ENCODE measurements at regions of chr14 and their contacts with region 1.

Region 1: GRCh38 chr14:64294672-64295413 is 672 bp upstream of the ESR2 start:
- DNase-seq: peak; percentile 42 to 84
- H3K4me3 ChIP-seq: peak overlapping the region; percentile 43; the same call in 1 of the 2 replicates
- H3K27ac ChIP-seq: no peak overlapping the region
- H3K4me1 ChIP-seq: 0 out of 2 replicates have a peak, but pooled peaks cover 9% of the 10 kb centered on the region
- H3K27me3 ChIP-seq: no peaks in the 10 kb centered on the region
- CTCF ChIP-seq: peak; percentile 97

Region 2: DNA sequence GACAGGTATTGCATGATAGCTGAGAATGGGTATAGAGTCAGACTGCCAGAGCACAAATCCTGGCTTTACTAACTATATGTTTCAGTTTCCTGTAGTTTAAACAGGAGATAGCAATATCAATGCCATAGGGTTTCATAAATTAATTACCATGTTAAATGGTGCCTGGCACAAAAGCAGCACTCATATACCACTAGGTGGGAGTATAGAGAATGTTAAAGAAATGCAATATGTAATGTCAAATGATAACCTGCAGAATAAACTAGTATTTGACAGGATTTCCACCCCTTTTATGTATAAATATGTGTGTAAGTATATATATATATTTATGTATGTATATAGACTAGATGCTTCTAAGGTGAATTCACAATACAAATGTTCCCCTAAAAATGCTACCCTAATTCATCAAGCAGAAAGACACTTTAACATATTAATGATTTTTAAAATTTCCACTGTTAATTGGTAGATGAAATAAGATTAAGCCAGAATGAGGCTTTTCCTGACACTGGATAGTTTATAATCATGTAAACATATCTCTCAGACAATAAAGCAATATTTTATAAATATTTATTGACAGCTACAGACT is 661.8 kb before region 1 on chr14:
- CTCF ChIA-PET with region 1: no interaction called
- POLR2A ChIA-PET with region 1: no interaction called
- intact Hi-C with region 1: loop called (anchors 10 kb)
- DNase-seq: peak in 1 of 2 experiments; percentile 44
- H3K4me3 ChIP-seq: no peak overlapping the region
- H3K27ac ChIP-seq: no peak overlapping the region
- H3K4me1 ChIP-seq: no peaks in the 10 kb centered on the region
- H3K27me3 ChIP-seq: no peaks in the 10 kb centered on the region
- CTCF ChIP-seq: peak; percentile 75

Region 3: GRCh38 chr14:63800651-63801375 is 494.0 kb before region 1 on chr14:
- CTCF ChIA-PET with region 1: no interaction called
- POLR2A ChIA-PET with region 1: no interaction called
- intact Hi-C with region 1: loop called (anchors 2 kb)
- DNase-seq: no peak
- H3K4me3 ChIP-seq: no peak overlapping the region
- H3K27ac ChIP-seq: no peak overlapping the region
- H3K4me1 ChIP-seq: 0 out of 2 replicates have a peak, but pooled peaks cover 4% of the 10 kb centered on the region
- H3K27me3 ChIP-seq: no peaks in the 10 kb centered on the region
- CTCF ChIP-seq: no peak

Region 4: DNA sequence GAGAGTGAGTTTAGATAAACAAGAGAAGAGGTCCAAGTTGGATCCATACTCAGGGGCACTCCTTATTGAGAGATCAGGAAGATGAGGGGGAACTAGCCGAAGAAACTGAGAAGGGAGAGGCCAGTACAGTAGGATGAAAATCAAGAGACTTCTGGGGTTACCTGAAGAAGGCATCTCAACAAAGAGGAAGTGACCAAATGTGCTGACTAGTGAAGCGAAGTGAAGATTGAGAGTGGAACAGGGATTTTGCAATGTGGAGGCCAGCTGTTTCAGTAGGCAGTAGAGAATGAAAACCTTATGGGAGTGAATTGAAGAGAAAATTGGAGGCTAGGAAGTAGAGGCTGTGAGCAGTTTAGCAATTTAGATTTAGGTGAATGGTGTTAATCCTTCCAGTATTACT is 289.0 kb before region 1 on chr14:
- CTCF ChIA-PET with region 1: interaction called, 3 read pairs
- POLR2A ChIA-PET with region 1: no interaction called
- intact Hi-C with region 1: loop called (anchors 2 kb)
- DNase-seq: no peak
- H3K4me3 ChIP-seq: no peak overlapping the region
- H3K27ac ChIP-seq: no peak overlapping the region
- H3K4me1 ChIP-seq: no peaks in the 10 kb centered on the region
- H3K27me3 ChIP-seq: no peaks in the 10 kb centered on the region
- CTCF ChIP-seq: no peak

Region 5: GRCh38 chr14:64137657-64138290 is 157.1 kb before region 1 on chr14:
- CTCF ChIA-PET with region 1: no interaction called
- POLR2A ChIA-PET with region 1: no interaction called
- intact Hi-C with region 1: loop called (anchors 2 kb)
- DNase-seq: no peak
- H3K4me3 ChIP-seq: no peak overlapping the region
- H3K27ac ChIP-seq: no peak overlapping the region
- H3K4me1 ChIP-seq: no peaks in the 10 kb centered on the region
- H3K27me3 ChIP-seq: no peaks in the 10 kb centered on the region
- CTCF ChIP-seq: no peak; the same call in 1 of the 2 replicates

Region 6: GRCh38 chr14:64159588-64159987 is 135.3 kb before region 1 on chr14:
- CTCF ChIA-PET with region 1: no interaction called
- POLR2A ChIA-PET with region 1: no interaction called
- intact Hi-C with region 1: loop called (anchors 10 kb)
- DNase-seq: no peak
- H3K4me3 ChIP-seq: no peak overlapping the region
- H3K27ac ChIP-seq: no peak overlapping the region
- H3K4me1 ChIP-seq: no peaks in the 10 kb centered on the region
- H3K27me3 ChIP-seq: no peaks in the 10 kb centered on the region
- CTCF ChIP-seq: no peak